Activated CD4-positive, alpha-beta T cell treated with anti-CD3 and anti-CD28 coated beads for 36 hours (primary cell): ENCODE measurements at regions of chr21 and their contacts with region 1.

Region 1: DNA sequence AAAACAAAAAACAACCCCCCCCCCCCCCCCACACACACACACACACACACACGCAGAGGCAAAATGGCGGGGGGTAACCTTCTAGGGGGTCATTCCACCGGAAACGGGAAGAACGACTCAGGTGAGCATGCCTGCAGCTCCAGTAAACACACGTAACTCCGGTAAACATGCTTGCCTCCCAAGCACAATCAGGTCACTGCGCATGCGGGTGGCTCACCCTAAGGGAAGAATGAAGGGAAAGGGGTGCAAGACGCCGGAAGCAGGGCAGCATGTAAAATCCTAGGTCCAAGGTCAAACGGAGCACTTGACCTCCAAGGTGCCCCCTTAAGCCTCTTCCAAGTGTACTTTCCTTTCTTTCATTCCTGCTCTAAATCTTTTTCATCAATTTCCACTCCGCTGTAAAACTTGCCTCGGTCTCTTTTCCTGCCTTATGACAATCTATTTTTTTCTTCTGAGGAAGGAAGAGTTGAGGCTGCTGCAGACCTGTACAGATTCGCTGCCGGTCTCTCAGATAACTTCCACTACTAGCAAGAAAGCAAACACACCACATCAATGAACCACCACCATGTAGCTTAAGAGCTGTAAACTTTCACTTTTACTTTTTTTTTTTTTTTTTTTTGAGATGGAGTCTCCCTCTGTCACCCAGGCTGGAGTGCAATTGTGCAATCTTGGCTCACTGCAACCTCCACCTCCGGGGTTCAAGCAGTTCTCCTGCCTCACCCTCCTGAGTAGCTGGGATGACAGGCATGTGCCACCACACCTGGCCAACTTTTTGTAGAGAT is 21.0 kb upstream of the CBR3 start:
- DNase-seq: peak; percentile 42
- ATAC-seq: peak; percentile 30
- H3K4me3 Mint-ChIP-seq: peak overlapping the region; percentile 65
- H3K27ac Mint-ChIP-seq: peak overlapping the region; percentile 83
- H3K4me1 Mint-ChIP-seq: peaks cover 19% of the 10 kb centered on the region
- H3K27me3 Mint-ChIP-seq: no peaks in the 10 kb centered on the region

Region 2: GRCh38 chr21:35932232-35932911 is 181.5 kb before region 1 on chr21:
- CTCF ChIA-PET with region 1: no interaction called
- POLR2A ChIA-PET with region 1: no interaction called
- intact Hi-C with region 1: loop called in 1 of 2 experiments (anchors 5 kb)
- DNase-seq: peak; percentile 57
- ATAC-seq: peak; percentile 89
- H3K4me3 Mint-ChIP-seq: no peak overlapping the region
- H3K27ac Mint-ChIP-seq: no peak overlapping the region
- H3K4me1 Mint-ChIP-seq: no peaks in the 10 kb centered on the region
- H3K27me3 Mint-ChIP-seq: peaks cover 4% of the 10 kb centered on the region

Region 3: DNA sequence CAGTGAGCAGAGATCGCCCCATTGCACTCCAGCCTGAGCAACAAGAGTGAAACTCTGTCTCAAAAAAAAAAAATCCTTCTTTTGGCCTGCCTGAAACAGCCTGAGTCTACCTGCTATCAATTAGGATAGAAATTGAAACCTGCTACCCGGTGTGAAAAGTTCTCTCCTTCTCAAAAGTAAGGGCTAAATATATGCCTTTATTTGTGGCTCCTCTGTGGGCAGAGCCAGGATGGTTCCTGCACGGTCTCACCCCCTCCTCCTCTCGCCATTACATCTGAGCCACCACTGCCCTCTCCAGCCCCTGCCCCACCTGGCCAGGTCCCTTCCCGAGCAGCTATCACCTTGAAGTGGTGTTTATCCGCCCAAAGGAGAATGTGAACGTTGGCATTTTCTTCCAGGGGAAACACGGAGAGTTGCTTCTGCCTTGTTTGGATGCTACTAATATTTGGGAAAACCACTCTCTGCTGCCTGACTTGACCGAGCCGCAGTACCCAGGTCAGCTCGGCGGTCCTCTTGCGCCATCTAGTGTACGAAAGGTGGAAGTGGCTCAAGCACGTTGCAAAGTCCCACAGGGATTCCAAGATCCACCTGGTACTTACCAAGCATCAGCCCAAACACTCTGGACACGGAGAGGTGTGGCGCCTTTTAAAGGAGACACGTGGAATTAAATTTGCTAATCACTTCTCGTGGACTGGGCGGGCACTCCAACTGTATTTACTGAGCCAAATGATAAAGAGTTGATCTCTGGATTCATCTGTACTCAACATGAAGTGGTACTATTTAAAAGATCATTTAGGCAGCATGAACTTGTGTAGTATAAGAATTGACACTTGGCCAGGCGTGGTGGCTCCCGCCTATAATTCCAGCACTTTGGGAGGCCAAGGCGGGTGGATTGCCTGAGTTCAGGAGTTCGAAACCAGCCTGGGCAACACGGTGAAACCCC is 85.4 kb before region 1 on chr21:
- CTCF ChIA-PET with region 1: interaction called, 5 read pairs
- POLR2A ChIA-PET with region 1: no interaction called
- intact Hi-C with region 1: loop called in 1 of 2 experiments (anchors 1 kb)
- DNase-seq: peak; percentile 77
- ATAC-seq: peak; percentile 93
- H3K4me3 Mint-ChIP-seq: no peak overlapping the region
- H3K27ac Mint-ChIP-seq: no peak overlapping the region
- H3K4me1 Mint-ChIP-seq: peaks cover 5% of the 10 kb centered on the region
- H3K27me3 Mint-ChIP-seq: no peaks in the 10 kb centered on the region

Region 4: DNA sequence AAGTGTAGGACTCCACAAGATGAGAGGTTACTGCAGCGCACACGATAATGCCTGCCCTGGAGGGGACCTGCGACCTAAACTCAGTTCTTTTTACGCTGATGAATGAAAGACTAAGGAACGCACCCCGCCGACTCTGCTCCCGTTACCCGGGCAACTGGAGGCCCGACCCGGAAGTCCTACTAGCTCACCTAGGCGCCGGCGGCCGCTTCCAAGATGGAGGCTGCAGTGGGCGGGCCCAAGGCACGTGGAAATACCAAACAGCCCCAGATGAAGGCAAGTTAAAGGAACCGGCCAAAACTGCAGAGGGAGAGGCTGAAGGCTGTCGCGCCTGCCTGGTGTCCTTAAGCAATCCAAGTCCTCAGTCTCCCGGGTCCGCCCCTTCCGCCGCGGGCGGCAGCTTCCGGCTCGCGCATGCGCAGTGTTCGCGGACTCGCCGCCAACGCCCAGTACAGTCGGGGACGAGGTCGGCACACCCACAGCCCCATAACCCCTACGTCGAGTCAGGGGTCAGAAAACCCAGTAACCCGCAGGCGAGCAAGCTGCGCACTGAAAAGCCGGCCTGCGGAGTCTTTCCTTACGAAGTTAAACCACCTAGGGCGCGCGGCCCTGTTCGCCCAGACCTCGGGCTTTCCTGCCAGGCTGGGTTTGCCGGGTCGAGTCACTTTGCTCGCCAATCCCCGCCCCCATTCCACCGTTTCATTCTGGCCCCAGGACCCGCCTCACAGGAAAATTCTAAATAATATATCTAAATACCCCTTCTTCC is 53.5 kb before region 1 on chr21 and contains the start of gene SETD4:
- CTCF ChIA-PET with region 1: interaction called, 14 read pairs
- POLR2A ChIA-PET with region 1: no interaction called
- intact Hi-C with region 1: loop called (anchors 1 kb)
- DNase-seq: peak; percentile 95
- ATAC-seq: peak; percentile 92
- H3K4me3 Mint-ChIP-seq: peak within 1 kb of the TSS; percentile 89
- H3K27ac Mint-ChIP-seq: peak within 1 kb of the TSS; percentile 92
- H3K4me1 Mint-ChIP-seq: peaks cover 15% of the 10 kb centered on the region
- H3K27me3 Mint-ChIP-seq: no peaks in the 10 kb centered on the region
- total RNA-seq, gene SETD4: 11.0 to 17.6 TPM

Region 5: GRCh38 chr21:36079010-36079649 is 34.7 kb before region 1 on chr21:
- CTCF ChIA-PET with region 1: interaction called, 10 read pairs
- POLR2A ChIA-PET with region 1: no interaction called
- intact Hi-C with region 1: no loop called
- DNase-seq: peak; percentile 70
- ATAC-seq: peak; percentile 92
- H3K4me3 Mint-ChIP-seq: peak overlapping the region; percentile 64
- H3K27ac Mint-ChIP-seq: peak overlapping the region; percentile 96
- H3K4me1 Mint-ChIP-seq: peaks cover 34% of the 10 kb centered on the region
- H3K27me3 Mint-ChIP-seq: no peaks in the 10 kb centered on the region

Region 6: DNA sequence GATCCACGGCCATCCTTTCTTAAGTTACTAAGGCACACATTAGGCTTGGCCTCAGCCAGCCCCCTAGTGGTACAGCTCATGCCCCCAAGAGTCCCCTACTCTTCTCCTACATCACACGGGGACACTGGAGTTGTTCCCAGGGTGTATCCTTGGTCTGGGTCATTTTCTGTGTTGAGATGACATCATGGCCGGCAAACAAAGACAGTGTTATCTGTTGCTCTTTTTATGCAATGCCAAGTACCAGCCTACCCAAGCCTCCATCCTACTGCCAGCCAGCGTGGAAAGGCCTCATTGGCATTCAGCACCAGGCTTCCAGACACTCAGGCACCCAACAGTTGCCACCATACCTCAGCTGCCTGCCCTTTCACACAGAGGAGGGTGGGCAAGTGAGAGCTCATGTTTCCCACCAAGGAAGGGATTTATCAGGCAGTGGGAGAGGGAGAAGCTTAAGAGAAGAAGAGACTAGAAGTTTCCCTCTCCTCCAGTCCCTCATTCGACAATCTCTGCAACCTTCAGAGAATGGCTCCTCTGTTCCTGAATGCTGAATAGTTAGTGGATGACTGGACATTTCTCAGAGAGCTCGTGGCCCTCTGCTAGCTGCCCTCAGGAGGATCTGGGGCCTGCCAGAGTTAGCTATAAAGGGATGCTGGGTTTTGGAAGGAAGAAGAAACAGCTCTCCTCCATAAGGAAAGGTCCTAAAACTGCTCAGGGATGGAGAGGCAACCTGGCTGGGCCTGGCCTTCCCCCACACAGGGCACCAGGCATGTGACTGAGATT is 26.3 kb before region 1 on chr21:
- CTCF ChIA-PET with region 1: interaction called, 11 read pairs
- POLR2A ChIA-PET with region 1: no interaction called
- intact Hi-C with region 1: no loop called
- DNase-seq: no peak
- ATAC-seq: no peak
- H3K4me3 Mint-ChIP-seq: no peak overlapping the region
- H3K27ac Mint-ChIP-seq: no peak overlapping the region
- H3K4me1 Mint-ChIP-seq: peaks cover 2% of the 10 kb centered on the region
- H3K27me3 Mint-ChIP-seq: no peaks in the 10 kb centered on the region

Region 7: GRCh38 chr21:36125512-36126222 is 11.8 kb after region 1 on chr21:
- CTCF ChIA-PET with region 1: interaction called, 18 read pairs
- POLR2A ChIA-PET with region 1: no interaction called
- intact Hi-C with region 1: no loop called
- DNase-seq: peak; percentile 76
- ATAC-seq: peak; percentile 42
- H3K4me3 Mint-ChIP-seq: no peak overlapping the region
- H3K27ac Mint-ChIP-seq: no peak overlapping the region
- H3K4me1 Mint-ChIP-seq: peaks cover 11% of the 10 kb centered on the region
- H3K27me3 Mint-ChIP-seq: no peaks in the 10 kb centered on the region